Psoas muscle (tissue), 8 donors: ENCODE measurements at regions of chr2 and their contacts with region 1.

Region 1: DNA sequence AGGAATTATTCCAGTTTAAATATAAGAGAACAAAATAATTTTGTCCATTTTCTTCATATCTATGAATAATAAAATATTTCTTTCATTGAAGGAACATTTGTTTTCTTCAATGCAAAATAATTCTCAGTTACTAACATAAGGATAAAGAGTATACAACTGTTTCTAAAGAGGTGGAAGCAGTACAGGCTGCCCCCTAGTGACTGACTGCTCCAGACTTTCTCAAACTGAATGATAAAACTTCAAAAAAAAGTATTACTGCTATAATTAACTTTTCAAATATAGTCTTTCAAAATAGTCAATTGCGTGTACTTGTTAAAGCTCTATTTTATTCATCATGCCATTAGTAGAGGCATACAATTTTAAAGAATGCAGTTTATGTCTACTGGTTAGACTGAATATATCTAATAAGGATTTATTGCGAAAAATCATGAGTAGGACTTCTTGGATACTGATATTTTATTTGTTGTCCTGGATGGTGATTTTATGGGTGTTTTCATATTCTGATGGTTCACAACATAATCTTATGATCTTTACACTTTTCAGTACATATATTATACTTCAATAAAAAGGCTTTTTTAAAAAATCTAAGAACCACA is 100.1 kb downstream of the WDPCP start:
- DNase-seq: no peak
- ATAC-seq: no peak
- H3K4me3 ChIP-seq: no peak overlapping the region
- H3K27ac ChIP-seq: no peak overlapping the region
- H3K4me1 ChIP-seq: no peaks in the 10 kb centered on the region
- H3K27me3 ChIP-seq: no peaks in the 10 kb centered on the region
- CTCF ChIP-seq: peak; percentile 51

Region 2: GRCh38 chr2:62415019-62415431 is 1073.2 kb before region 1 on chr2:
- intact Hi-C with region 1: no loop called
- DNase-seq: no peak
- ATAC-seq: no peak
- H3K4me3 ChIP-seq: no peak overlapping the region
- H3K27ac ChIP-seq: no peak overlapping the region
- H3K4me1 ChIP-seq: peaks cover 4% of the 10 kb centered on the region
- H3K27me3 ChIP-seq: no peaks in the 10 kb centered on the region
- CTCF ChIP-seq: no peak

Region 3: DNA sequence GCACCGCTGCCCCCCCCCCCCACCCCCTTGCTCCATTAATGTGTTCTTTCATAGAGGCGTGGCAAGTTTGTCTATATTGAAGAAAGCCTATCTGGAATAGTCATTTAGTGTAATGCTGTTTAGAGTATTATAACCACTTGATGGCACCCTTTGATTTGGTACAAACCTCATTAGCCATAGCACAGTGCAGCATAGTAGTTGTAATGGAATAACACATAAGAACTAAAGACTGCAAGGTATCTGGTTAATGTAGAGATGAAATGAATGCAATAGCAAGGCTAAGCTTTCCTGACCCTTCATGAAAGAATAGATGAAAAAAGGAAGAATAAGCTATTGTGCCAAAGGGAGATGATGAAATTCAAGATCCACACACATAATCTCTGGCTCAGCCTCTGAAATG is 700.8 kb before region 1 on chr2:
- intact Hi-C with region 1: loop called in 1 of 2 experiments (anchors 10 kb)
- DNase-seq: no peak
- ATAC-seq: peak in 3 of 4 donors; percentile 61 to 71 (median 63)
- H3K4me3 ChIP-seq: no peak overlapping the region
- H3K27ac ChIP-seq: no peak overlapping the region
- H3K4me1 ChIP-seq: no peaks in the 10 kb centered on the region
- H3K27me3 ChIP-seq: no peaks in the 10 kb centered on the region
- CTCF ChIP-seq: peak; percentile 27

Region 4: GRCh38 chr2:63364866-63365265 is 123.3 kb before region 1 on chr2:
- intact Hi-C with region 1: no loop called
- DNase-seq: no peak
- ATAC-seq: peak in 1 of 4 donors; percentile 37
- H3K4me3 ChIP-seq: no peak overlapping the region
- H3K27ac ChIP-seq: no peak overlapping the region
- H3K4me1 ChIP-seq: no peaks in the 10 kb centered on the region
- H3K27me3 ChIP-seq: no peaks in the 10 kb centered on the region
- CTCF ChIP-seq: no peak

Region 5: GRCh38 chr2:63522950-63523349 is 34.7 kb after region 1 on chr2:
- intact Hi-C with region 1: no loop called
- DNase-seq: no peak
- ATAC-seq: no peak
- H3K4me3 ChIP-seq: no peak overlapping the region
- H3K27ac ChIP-seq: no peak overlapping the region
- H3K4me1 ChIP-seq: no peaks in the 10 kb centered on the region
- H3K27me3 ChIP-seq: no peaks in the 10 kb centered on the region
- CTCF ChIP-seq: no peak

Region 6: GRCh38 chr2:63755965-63756364 is 267.7 kb after region 1 on chr2:
- intact Hi-C with region 1: no loop called
- DNase-seq: no peak
- ATAC-seq: no peak
- H3K4me3 ChIP-seq: no peak overlapping the region
- H3K27ac ChIP-seq: no peak overlapping the region
- H3K4me1 ChIP-seq: peaks cover 3% of the 10 kb centered on the region
- H3K27me3 ChIP-seq: no peaks in the 10 kb centered on the region
- CTCF ChIP-seq: no peak